Left cardiac atrium (tissue), 4 donors: ENCODE measurements at regions of chr22 and their contacts with region 1.

Region 1: GRCh38 chr22:32796865-32797573 is 4.5 kb upstream of the TIMP3 start:
- DNase-seq: peak; percentile 79
- ATAC-seq: peak; percentile 54 to 59

Region 2: GRCh38 chr22:32528984-32529982 is 267.7 kb before region 1 on chr22:
- intact Hi-C with region 1: loop called (anchors 2 kb)
- DNase-seq: peak; percentile 92
- ATAC-seq: peak; percentile 71 to 78

Region 3: GRCh38 chr22:32558681-32559355 is 238.2 kb before region 1 on chr22:
- intact Hi-C with region 1: no loop called
- DNase-seq: peak; percentile 81
- ATAC-seq: peak in 1 of 2 donors; percentile 96

Region 4: GRCh38 chr22:32660292-32660691 is 136.7 kb before region 1 on chr22:
- intact Hi-C with region 1: loop called (anchors 2 kb)
- DNase-seq: peak; percentile 72
- ATAC-seq: peak; percentile 75 to 77

Region 5: GRCh38 chr22:32836280-32837123 is 39.5 kb after region 1 on chr22:
- intact Hi-C with region 1: loop called in 1 of 2 experiments (anchors 5 kb)
- DNase-seq: no peak
- ATAC-seq: no peak

Region 6: DNA sequence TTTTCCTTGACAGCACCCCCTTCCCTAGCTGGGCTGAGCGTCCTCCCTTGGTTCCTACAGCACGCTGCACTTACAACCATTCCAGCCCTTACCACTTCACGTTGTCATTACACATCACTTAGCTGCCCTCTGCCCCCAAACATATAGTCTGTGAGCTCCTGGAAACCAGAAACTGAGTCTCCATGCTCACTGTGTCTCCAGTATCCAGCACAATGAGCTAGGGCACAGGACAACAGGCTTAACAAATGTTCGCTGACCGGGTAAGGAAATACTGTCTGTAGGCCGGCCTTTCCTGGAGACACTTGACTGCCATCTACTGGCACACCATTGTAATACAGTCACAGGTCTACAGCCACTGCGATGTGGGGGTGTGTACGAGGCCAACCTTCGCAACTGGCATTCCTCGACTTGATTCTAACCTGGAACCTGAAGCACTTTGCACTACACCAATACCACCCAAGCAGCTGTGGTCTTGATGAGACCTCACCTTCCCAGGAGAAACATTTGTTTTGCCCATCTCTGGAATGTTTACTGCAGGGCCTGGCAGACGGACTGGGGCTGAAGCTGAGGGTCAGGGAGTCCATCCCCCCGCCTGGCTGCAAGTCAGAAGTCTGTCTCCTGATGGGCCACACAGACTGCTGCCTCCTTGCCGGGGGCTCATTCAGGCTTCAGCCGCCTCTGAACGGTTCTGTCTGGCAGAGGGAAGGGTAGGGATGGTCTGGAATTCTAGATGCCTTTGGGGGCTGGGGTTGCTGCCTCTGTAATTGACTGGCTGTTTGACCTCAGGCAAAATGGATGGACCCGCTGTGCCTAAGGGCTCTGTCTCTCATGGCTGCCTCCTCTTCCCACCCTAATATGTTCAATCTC is 189.1 kb after region 1 on chr22:
- intact Hi-C with region 1: loop called in 1 of 2 experiments (anchors 5 kb)
- DNase-seq: peak; percentile 64
- ATAC-seq: peak; percentile 95 to 97

Region 7: GRCh38 chr22:33000342-33001280 is 203.6 kb after region 1 on chr22:
- intact Hi-C with region 1: loop called in 1 of 2 experiments (anchors 10 kb)
- DNase-seq: peak; percentile 67
- ATAC-seq: peak; percentile 79 to 85